Endothelial cell of umbilical vein (primary cell): ENCODE measurements at regions of chr2 and their contacts with region 1.

Region 1: GRCh38 chr2:42132966-42133641 is 36.0 kb upstream of the EML4 start:
- DNase-seq: peak; percentile 89
- H3K4me3 ChIP-seq: no peak overlapping the region
- H3K27ac ChIP-seq: no peak overlapping the region
- H3K4me1 ChIP-seq: peaks cover 34% of the 10 kb centered on the region
- H3K27me3 ChIP-seq: peaks cover 0 to 3% of the 10 kb centered on the region in 2 experiments
- CTCF ChIP-seq: no peak
- POLR2A ChIP-seq: no peak

Region 2: GRCh38 chr2:42101206-42102023 is 31.7 kb before region 1 on chr2:
- CTCF ChIA-PET with region 1: interaction called, 5 read pairs
- POLR2A ChIA-PET with region 1: no interaction called
- dilution Hi-C with region 1: no loop called
- intact Hi-C with region 1: loop called (anchors 1 kb)
- DNase-seq: peak; percentile 42
- H3K4me3 ChIP-seq: peak overlapping the region in 1 of 3 experiments; percentile 35
- H3K27ac ChIP-seq: no peak overlapping the region
- H3K4me1 ChIP-seq: peaks cover 8% of the 10 kb centered on the region
- H3K27me3 ChIP-seq: peaks cover 0 to 3% of the 10 kb centered on the region in 2 experiments
- CTCF ChIP-seq: no peak
- POLR2A ChIP-seq: no peak

Region 3: DNA sequence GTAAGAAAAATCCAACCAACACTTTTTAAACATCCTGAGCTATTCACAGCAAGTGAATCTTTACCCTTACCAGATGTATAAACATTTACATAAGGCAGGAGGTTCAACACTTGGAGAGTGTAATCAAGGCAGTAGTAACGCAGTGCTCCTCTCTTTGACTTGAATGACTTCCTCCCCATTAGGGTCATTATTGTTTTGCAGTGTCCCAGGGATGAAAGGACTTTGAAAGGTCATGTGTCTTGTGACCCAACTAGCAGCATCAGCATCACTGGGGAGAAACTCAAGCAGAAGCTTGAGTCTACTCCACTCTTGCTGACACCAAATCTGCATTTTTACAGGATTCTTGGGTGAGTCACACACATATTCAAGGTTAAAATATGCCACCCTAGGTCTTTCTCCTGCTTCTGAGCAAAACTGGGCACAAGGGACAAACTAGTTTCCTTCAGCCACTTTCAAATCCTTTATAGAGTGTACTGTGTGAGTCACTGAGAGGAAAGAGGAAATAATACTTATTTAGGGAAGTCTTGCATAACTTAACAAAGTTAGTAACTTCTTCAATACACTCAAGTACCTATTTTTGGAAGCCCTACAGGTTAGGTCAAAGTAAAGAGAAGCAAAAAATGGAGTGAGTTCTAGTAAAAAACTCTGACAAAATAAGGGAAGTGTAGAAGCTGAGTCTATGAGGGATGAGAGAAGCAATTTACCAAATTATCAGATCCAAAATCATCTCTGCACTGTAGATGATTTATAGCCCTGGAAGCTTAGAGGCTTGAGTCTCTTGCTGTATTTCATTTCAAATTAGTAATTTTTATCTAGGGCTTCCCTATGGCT is 15.0 kb before region 1 on chr2:
- CTCF ChIA-PET with region 1: interaction called, 5 read pairs
- POLR2A ChIA-PET with region 1: no interaction called
- dilution Hi-C with region 1: no loop called
- intact Hi-C with region 1: loop called (anchors 1 kb)
- DNase-seq: peak; percentile 57
- H3K4me3 ChIP-seq: no peak overlapping the region
- H3K27ac ChIP-seq: no peak overlapping the region
- H3K4me1 ChIP-seq: peaks cover 18% of the 10 kb centered on the region
- H3K27me3 ChIP-seq: peaks cover 4 to 5% of the 10 kb centered on the region in 2 experiments
- CTCF ChIP-seq: no peak
- POLR2A ChIP-seq: no peak

Region 4: GRCh38 chr2:42169100-42169873 is 36.2 kb after region 1 on chr2 and contains the start of gene EML4:
- CTCF ChIA-PET with region 1: interaction called, 5 read pairs
- POLR2A ChIA-PET with region 1: no interaction called
- dilution Hi-C with region 1: no loop called
- intact Hi-C with region 1: loop called (anchors 5 kb)
- DNase-seq: peak; percentile 84
- H3K4me3 ChIP-seq: peak within 1 kb of the TSS; percentile 72 to 76 (median 75)
- H3K27ac ChIP-seq: peak within 1 kb of the TSS; percentile 78
- H3K4me1 ChIP-seq: peaks cover 7% of the 10 kb centered on the region
- H3K27me3 ChIP-seq: peaks cover 6 to 7% of the 10 kb centered on the region in 2 experiments
- CTCF ChIP-seq: no peak
- POLR2A ChIP-seq: peak; percentile 80
- total RNA-seq, gene EML4: 30.8 and 32.0 TPM in 2 replicates

Region 5: DNA sequence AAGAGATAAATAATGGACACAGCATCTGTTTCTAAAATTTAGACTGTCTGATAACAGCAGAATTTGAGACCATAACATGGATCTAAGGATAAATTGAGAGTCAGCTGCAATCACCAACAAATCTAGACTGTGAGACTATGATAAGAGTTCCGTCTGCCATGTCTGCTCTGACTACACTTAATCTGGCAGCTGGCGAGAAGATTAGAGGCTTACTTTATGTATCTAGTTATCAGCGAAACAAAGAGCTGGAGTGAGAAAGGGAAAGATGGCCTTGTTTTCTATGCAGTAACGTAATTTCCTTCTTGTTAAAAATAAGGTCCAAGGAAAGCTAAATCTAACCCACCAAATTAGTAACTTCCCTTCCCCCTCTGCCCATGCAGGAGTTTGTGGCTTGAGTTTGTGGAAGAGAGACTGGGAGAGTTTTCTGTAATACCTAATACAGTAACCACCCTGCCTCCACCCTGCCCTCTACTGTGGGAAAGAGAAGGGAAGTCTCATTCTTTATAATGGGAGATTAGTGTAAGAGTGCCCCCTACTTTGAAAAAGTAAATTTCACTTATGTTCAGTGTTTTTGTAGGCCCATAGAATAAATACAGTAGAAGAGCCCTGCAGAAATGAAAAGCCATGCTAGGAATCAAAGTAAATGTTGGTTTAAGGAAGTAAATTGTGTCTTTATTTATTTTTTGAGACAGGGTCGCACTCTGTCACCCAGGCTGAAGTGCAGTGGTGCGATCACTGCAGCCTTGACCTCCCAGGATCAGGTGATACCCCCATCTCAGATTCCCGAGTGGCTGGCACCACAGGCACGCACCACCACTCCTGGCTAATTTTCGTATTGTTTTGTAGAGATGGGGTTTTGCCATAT is 63.5 kb after region 1 on chr2:
- CTCF ChIA-PET with region 1: no interaction called
- POLR2A ChIA-PET with region 1: no interaction called
- dilution Hi-C with region 1: no loop called
- intact Hi-C with region 1: no loop called
- DNase-seq: peak; percentile 29
- H3K4me3 ChIP-seq: no peak overlapping the region
- H3K27ac ChIP-seq: no peak overlapping the region
- H3K4me1 ChIP-seq: peaks cover 9% of the 10 kb centered on the region
- H3K27me3 ChIP-seq: no peaks in the 10 kb centered on the region
- CTCF ChIP-seq: peak; percentile 11 to 28
- POLR2A ChIP-seq: no peak